Activated CD4-positive, alpha-beta memory T cell treated with anti-CD3 and anti-CD28 coated beads for 36 hours (primary cell): ENCODE measurements at regions of chr3 and their contacts with region 1.

Region 1: GRCh38 chr3:187919048-187919447 is 173.8 kb upstream of the BCL6 start:
- DNase-seq: peak; percentile 75
- H3K4me3 Mint-ChIP-seq: peak overlapping the region; percentile 51
- H3K27ac Mint-ChIP-seq: peak overlapping the region; percentile 94
- H3K4me1 Mint-ChIP-seq: peaks cover 75% of the 10 kb centered on the region
- H3K27me3 Mint-ChIP-seq: peaks cover 3% of the 10 kb centered on the region

Region 2: GRCh38 chr3:187770224-187770623 is 148.8 kb before region 1 on chr3:
- CTCF ChIA-PET with region 1: no interaction called
- POLR2A ChIA-PET with region 1: no interaction called
- intact Hi-C with region 1: loop called (anchors 1 kb)
- DNase-seq: peak; percentile 63
- H3K4me3 Mint-ChIP-seq: peak overlapping the region; percentile 20
- H3K27ac Mint-ChIP-seq: peak overlapping the region; percentile 73
- H3K4me1 Mint-ChIP-seq: peaks cover 43% of the 10 kb centered on the region
- H3K27me3 Mint-ChIP-seq: no peaks in the 10 kb centered on the region

Region 3: GRCh38 chr3:187929112-187929816 is 10.2 kb after region 1 on chr3:
- CTCF ChIA-PET with region 1: no interaction called
- POLR2A ChIA-PET with region 1: no interaction called
- intact Hi-C with region 1: no loop called
- DNase-seq: peak; percentile 33
- H3K4me3 Mint-ChIP-seq: no peak overlapping the region
- H3K27ac Mint-ChIP-seq: peak overlapping the region; percentile 53
- H3K4me1 Mint-ChIP-seq: peaks cover 68% of the 10 kb centered on the region
- H3K27me3 Mint-ChIP-seq: peaks cover 3% of the 10 kb centered on the region

Region 4: DNA sequence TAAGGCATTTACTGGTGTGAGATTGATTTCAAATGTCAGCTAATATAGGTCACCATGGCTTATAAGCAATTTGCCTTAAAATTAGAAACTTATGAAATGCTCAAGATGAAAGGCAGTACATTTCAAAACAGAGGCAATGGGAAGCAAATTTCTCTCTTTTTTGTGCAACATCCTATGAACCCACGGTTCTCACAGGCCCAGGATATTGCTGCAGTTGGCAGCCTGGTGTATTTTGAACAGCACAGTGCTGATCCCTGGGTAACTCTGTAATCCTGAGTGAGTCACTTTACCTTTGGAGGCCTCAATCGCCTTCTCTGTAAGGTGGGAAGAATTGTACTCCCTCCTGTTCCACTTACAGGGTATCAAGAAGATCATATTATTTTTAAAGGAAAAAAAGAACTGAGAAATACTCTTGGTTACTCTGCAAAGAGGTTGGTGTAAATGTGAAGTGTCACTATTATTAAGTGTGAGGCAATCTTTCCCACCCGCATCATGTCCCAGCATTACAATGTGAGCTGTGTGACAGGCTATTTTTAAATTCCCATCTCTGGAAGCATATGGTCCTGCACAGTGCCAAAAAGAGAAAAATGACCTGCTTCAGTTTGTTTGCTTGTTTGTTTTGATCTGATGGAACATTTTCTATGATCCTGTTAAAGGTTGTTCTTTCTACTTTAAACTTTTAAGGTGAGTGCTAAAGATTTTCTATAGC is 44.8 kb after region 1 on chr3:
- CTCF ChIA-PET with region 1: interaction called, 3 read pairs
- POLR2A ChIA-PET with region 1: no interaction called
- intact Hi-C with region 1: loop called (anchors 2 kb)
- DNase-seq: no peak
- H3K4me3 Mint-ChIP-seq: no peak overlapping the region
- H3K27ac Mint-ChIP-seq: peak overlapping the region; percentile 0
- H3K4me1 Mint-ChIP-seq: peaks cover 9% of the 10 kb centered on the region
- H3K27me3 Mint-ChIP-seq: no peaks in the 10 kb centered on the region

Region 5: GRCh38 chr3:188154014-188154808 is 235.2 kb after region 1 on chr3 and contains the start of gene LPP:
- CTCF ChIA-PET with region 1: no interaction called
- POLR2A ChIA-PET with region 1: interaction called, 3 read pairs
- intact Hi-C with region 1: loop called (anchors 5 kb)
- DNase-seq: peak; percentile 91
- H3K4me3 Mint-ChIP-seq: peak within 1 kb of the TSS; percentile 88
- H3K27ac Mint-ChIP-seq: peak within 1 kb of the TSS; percentile 97
- H3K4me1 Mint-ChIP-seq: peaks cover 63% of the 10 kb centered on the region
- H3K27me3 Mint-ChIP-seq: no peaks in the 10 kb centered on the region
- total RNA-seq, gene LPP: 41.0 to 43.6 TPM

Region 6: DNA sequence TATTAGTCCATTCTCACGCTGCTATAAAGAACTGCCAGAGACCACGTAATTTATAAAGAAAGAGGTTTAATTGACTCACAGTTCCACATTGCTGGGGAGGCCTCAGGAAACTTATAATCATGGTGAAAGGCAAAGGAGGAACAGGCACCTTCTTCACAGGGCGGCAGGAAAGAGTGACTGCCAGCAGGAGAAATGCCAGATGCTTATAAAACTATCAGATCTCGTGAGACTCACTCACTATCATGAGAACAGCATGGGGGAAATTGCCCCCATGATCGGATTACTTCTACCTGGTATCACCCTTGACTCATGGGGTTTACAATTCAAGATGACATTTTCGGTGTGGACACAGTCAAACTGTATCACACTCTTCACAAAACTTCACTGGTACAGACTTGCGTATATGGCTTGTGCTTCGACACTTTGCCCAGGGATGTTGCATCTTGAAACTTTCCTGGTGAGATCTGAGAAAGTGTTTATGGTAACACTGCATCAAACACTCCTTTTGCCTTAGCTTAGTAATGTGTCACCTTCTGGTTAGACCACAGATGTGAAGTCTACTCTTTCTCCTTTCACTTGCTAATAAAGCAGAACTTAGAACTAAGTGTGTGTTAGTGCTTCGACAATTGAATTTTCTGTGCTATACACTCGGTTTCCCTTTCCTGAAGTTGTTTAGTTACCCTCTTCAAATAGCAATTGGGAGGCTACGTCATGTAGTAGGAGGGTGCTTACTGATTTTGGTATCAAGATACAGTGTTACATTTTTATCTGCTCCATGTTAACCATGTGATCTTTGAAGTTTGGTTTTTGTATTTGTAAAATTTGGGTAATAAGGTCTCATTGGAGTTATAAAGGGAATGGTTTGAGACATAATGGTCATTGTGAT is 420.6 kb after region 1 on chr3:
- CTCF ChIA-PET with region 1: no interaction called
- POLR2A ChIA-PET with region 1: no interaction called
- intact Hi-C with region 1: loop called (anchors 1 kb)
- DNase-seq: peak; percentile 75
- H3K4me3 Mint-ChIP-seq: peak overlapping the region; percentile 68
- H3K27ac Mint-ChIP-seq: peak overlapping the region; percentile 93
- H3K4me1 Mint-ChIP-seq: peaks cover 44% of the 10 kb centered on the region
- H3K27me3 Mint-ChIP-seq: peaks cover 2% of the 10 kb centered on the region

Region 7: GRCh38 chr3:188914552-188914951 is 995.5 kb after region 1 on chr3:
- CTCF ChIA-PET with region 1: no interaction called
- POLR2A ChIA-PET with region 1: no interaction called
- intact Hi-C with region 1: loop called (anchors 1 kb)
- DNase-seq: peak; percentile 23
- H3K4me3 Mint-ChIP-seq: no peak overlapping the region
- H3K27ac Mint-ChIP-seq: peak overlapping the region; percentile 86
- H3K4me1 Mint-ChIP-seq: peaks cover 43% of the 10 kb centered on the region
- H3K27me3 Mint-ChIP-seq: no peaks in the 10 kb centered on the region